ENCODE measurements at regions of chr2 and their contacts with region 1.

Region 1: GRCh38 chr2:74178201-74179062 is at the start of gene MOB1A:
- DNase-seq: peak; percentile 99
- H3K4me3 Mint-ChIP-seq: peak within 1 kb of the TSS; percentile 83
- H3K27ac Mint-ChIP-seq: peak within 1 kb of the TSS; percentile 76
- H3K4me1 Mint-ChIP-seq: peaks cover 45% of the 10 kb centered on the region
- H3K27me3 Mint-ChIP-seq: no peaks in the 10 kb centered on the region
- total RNA-seq, gene MOB1A: 159 to 170 TPM

Region 2: DNA sequence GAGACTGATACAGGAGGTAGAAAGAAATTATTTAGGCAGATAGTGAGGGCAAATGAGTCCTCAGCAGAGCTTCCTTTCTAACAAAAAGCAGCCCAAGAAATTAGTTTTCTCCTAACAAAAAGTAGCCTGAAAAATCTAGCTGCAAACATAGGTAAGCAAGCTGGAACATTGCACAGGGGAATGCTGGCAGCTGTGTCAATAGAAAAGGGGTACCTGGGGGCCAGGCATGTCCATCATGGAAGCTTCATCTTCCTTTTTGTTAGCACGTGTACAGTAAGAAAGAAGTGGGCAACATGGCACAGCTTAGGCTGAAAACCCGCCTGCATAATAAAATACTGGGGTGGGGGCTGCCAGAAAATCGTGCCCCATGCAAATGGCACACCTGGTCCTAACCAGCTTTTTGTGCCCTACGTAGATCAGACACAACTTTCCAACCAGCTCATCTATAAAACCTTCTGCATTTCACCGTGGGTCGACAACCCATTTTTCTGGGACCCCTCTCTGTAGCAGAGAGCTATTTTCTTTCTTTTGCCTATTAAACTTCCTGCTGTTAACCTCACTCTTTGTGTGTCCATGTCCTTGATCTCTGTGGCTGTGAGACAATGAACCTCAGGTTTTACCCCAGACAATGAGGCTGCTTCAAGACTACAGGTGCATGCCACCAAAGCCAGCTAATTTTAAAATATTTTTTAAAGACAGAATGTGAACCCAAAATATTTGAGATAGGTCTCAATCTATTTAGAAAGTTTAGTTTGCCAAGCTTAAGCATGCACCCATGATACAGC is 13.4 kb after region 1 on chr2:
- CTCF ChIA-PET with region 1: interaction called, 42 read pairs
- POLR2A ChIA-PET with region 1: interaction called, 124 read pairs
- intact Hi-C with region 1: no loop called
- DNase-seq: no peak
- H3K4me3 Mint-ChIP-seq: no peak overlapping the region
- H3K27ac Mint-ChIP-seq: no peak overlapping the region
- H3K4me1 Mint-ChIP-seq: no peaks in the 10 kb centered on the region
- H3K27me3 Mint-ChIP-seq: peaks cover 2% of the 10 kb centered on the region

Region 3: DNA sequence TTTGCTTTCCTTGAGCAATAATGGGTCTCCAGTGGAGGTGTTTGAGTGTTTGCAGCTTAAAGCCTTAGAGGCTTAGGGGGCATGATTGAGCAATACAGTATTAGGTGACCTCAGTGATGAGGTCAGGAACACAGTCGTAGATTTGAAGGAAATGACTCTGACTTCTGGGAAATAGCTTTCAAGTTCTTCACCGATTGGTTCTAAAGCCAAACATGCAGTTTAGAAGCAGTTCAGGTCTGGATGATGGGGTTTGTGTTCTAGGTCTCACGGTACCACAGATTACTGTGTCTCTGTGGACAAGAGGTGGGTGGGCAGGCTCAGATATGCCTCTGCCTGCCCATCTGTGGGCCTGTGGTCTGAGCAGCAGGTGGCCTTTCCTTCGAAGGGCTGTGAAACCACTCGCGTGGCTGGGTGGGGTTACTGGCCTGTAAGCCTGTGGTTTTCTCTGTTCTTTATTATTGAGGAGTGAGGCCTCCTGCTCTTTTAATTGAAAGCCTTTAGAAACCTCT is 27.8 kb after region 1 on chr2:
- CTCF ChIA-PET with region 1: interaction called, 20 read pairs
- POLR2A ChIA-PET with region 1: interaction called, 124 read pairs
- intact Hi-C with region 1: loop called (anchors 1 kb)
- DNase-seq: peak; percentile 74
- H3K4me3 Mint-ChIP-seq: peak overlapping the region; percentile 66
- H3K27ac Mint-ChIP-seq: peak overlapping the region; percentile 98
- H3K4me1 Mint-ChIP-seq: peaks cover 67% of the 10 kb centered on the region
- H3K27me3 Mint-ChIP-seq: no peaks in the 10 kb centered on the region

Region 4: GRCh38 chr2:74226648-74227213 is 48.3 kb after region 1 on chr2:
- CTCF ChIA-PET with region 1: no interaction called
- POLR2A ChIA-PET with region 1: no interaction called
- intact Hi-C with region 1: no loop called
- DNase-seq: no peak
- H3K4me3 Mint-ChIP-seq: no peak overlapping the region
- H3K27ac Mint-ChIP-seq: no peak overlapping the region
- H3K4me1 Mint-ChIP-seq: peaks cover 4% of the 10 kb centered on the region
- H3K27me3 Mint-ChIP-seq: no peaks in the 10 kb centered on the region